Posterior vena cava (tissue), 2 donors: ENCODE measurements at regions of chr2 and their contacts with region 1.

Region 1: DNA sequence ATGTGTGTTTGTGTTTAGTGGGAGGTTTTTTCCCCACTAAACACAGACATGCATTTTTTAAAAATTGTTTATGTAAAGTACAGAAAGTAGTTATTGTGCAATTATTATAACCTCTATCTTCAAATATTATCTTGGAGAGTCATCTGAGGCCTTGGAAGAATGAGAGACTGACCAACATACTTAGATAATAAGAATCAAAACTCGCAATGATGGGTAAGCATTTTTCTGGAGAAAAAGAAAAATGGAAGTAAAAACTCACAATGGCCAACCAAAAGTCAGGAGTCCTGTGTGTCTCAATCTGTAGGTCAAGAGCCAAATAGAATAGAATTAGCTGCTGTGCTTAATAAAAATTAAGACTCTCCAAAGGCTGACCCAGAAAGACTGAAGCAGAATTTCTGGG is 43.0 kb downstream of the MEMO1 start:
- DNase-seq: no peak

Region 2: GRCh38 chr2:31947871-31948270 is 19.9 kb before region 1 on chr2:
- intact Hi-C with region 1: loop called in 1 of 2 experiments (anchors 2 kb)
- DNase-seq: no peak

Region 3: GRCh38 chr2:32522770-32523169 is 555.0 kb after region 1 on chr2:
- intact Hi-C with region 1: no loop called
- DNase-seq: no peak